ENCODE measurements at regions of chr14 and their contacts with region 1.

Region 1: GRCh38 chr14:69818757-69819191 is 21.7 kb upstream of the SLC10A1 start:
- DNase-seq: no peak
- H3K4me3 ChIP-seq: no peak overlapping the region
- H3K27ac ChIP-seq: no peak overlapping the region
- H3K4me1 ChIP-seq: peaks cover 0 to 4% (median 1%) of the 10 kb centered on the region in 4 donors
- H3K27me3 ChIP-seq: peaks cover 0 to 22% (median 0%) of the 10 kb centered on the region in 3 donors
- CTCF ChIP-seq: peak; percentile 75 to 89 (median 86)
- EP300 ChIP-seq: no peak
- POLR2A ChIP-seq: no peak

Region 2: DNA sequence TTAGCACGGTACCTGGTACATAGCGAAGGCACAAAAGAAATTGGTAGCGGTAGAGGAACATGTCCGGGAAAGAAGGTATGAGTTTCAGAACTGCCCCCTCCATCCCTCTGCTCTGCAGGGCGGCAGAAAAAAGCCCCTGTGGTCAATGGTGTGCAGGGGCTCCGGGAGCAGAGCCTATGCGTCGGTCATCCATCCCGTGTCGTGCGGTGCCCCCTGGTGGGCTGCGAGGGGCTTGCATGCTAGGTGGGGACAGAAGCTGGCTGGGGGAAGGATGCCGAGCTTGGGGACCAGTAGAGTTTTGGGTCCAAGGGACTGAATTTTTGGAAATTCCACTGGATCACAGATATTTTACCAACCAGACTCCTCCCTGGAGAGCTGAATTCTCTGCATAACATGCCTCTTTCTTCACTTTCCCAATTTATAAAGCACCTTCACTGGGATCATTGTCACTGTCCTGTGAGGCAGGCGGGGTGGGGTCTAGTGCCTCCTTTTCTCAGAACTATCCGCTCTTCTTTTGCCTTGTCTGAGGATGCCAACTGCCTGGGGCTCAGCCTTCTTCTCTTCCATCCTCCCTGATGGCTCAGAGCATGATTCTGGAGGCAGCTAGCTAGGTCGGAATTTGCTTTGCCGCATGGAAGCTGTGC is 209.1 kb after region 1 on chr14:
- intact Hi-C with region 1: loop called (anchors 1 kb)
- DNase-seq: peak; percentile 76
- H3K4me3 ChIP-seq: no peak overlapping the region
- H3K27ac ChIP-seq: no peak overlapping the region
- H3K4me1 ChIP-seq: no peaks in the 10 kb centered on the region
- H3K27me3 ChIP-seq: peaks cover 0 to 9% (median 6%) of the 10 kb centered on the region in 3 donors
- CTCF ChIP-seq: peak; percentile 26 to 76 (median 72)
- EP300 ChIP-seq: no peak
- POLR2A ChIP-seq: no peak

Region 3: DNA sequence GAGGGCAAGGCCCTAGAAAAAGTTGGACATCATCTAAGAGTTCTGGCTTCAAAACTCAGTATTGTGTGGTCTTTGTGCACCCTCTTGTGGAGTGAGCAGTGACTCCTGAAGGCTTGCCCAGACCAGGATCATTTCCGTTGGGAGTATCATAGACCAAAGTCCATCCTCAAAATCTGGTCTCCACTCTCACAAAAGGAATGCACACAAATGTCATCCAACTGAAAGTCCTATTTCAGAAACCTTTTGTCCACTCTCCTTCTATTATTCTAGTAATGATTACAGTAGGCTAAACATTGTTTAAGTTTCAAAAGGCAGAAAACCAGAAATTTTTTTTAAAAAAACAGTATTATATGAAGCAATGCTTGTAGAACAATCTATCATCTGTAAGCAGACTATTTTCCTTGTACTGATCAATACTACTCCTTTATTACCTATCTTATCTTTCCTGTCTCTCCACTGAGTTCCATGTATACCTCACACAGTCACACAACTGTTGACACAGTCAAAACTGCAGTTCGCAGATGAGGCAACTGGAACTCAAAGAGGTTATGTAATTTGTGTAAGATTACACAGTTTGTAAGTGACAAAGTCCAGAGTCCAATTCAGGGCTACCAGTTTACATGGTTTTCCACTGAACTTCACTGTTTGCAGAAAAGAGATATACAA is 499.3 kb after region 1 on chr14:
- intact Hi-C with region 1: loop called (anchors 5 kb)
- DNase-seq: no peak
- H3K4me3 ChIP-seq: no peak overlapping the region
- H3K27ac ChIP-seq: no peak overlapping the region
- H3K4me1 ChIP-seq: no peaks in the 10 kb centered on the region
- H3K27me3 ChIP-seq: no peaks in the 10 kb centered on the region
- CTCF ChIP-seq: peak in 1 of 4 experiments; percentile 26
- EP300 ChIP-seq: no peak
- POLR2A ChIP-seq: no peak

Region 4: DNA sequence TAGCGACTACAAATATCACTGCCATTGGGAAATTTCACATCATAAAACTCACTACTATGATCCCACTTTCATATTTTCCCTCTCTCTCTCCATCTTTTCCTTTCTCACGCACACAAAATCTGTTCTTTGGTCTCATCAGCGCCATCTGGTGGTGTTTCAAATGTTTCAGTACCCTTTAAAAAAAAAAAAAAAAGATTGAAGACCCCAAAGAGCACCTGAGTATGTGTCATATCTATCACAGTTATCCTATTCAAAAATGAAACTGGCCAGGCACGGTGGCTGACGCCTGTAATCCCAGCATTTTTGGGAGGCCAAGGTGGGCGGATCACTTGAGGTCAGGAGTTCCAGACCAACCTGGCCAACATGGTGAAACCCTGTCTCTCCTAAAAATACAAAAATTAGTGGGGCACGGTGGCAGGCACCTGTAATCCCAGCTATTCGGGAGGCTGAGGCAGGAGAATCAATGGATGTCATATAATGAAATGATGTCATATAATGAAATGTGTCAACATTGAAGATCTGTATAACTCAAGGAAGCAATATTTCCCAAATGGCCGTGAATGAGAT is 895.4 kb after region 1 on chr14:
- intact Hi-C with region 1: loop called (anchors 10 kb)
- DNase-seq: no peak
- H3K4me3 ChIP-seq: no peak overlapping the region
- H3K27ac ChIP-seq: no peak overlapping the region
- H3K4me1 ChIP-seq: peaks cover 0 to 6% (median 0%) of the 10 kb centered on the region in 4 donors
- H3K27me3 ChIP-seq: peaks cover 0 to 5% (median 0%) of the 10 kb centered on the region in 3 donors
- CTCF ChIP-seq: peak in 3 of 4 experiments; percentile 43 to 57 (median 45)
- EP300 ChIP-seq: no peak
- POLR2A ChIP-seq: no peak